ENCODE measurements at regions of chr17 and their contacts with region 1.

Region 1: DNA sequence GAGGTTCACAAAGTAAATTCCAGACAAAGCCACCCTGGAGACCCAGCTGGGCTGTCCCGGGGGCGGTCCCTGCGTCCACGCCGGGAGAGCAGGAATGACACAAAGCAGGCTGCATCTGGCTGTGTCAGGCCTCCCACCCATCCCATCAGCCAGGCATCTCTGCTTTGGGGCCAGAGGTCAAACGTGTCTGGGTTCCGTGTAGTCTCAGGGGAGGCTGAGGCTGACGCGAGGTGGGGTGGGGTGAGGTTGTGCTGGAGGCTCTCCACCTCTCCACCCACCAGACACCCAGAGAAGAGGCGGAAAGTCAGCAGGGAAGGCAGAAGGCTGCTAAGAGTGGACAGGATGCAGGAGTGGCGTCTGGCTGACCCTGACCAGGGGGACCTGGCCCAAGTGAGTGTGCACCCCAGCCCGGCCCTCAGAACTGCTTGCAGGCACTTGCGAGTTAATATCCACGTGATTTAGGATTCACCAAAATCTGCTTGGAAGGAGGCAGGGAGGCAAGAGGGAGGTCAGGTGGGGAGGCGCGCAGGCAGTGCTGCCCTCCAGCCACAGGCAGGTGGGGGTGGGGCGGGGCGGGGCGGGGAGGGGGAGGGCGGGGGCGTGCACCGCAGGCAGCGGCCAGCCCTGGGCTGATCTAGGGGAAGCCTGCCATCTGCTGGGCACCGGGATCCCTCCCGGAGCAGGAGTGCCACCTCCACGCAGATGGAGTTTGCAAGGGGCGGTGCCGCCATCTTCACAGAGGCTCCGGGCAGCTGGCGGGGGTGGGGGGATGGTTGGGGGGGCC is 44.3 kb downstream of the TBC1D16 start:
- DNase-seq: peak; percentile 89
- H3K4me3 ChIP-seq: peak overlapping the region; percentile 18 to 36
- H3K27ac ChIP-seq: peak overlapping the region; percentile 76 to 90
- H3K4me1 ChIP-seq: peaks cover 43% of the 10 kb centered on the region
- H3K27me3 ChIP-seq: no peaks in the 10 kb centered on the region
- CTCF ChIP-seq: peak; percentile 38 to 83 (median 65)
- POLR2A ChIP-seq: no peak

Region 2: DNA sequence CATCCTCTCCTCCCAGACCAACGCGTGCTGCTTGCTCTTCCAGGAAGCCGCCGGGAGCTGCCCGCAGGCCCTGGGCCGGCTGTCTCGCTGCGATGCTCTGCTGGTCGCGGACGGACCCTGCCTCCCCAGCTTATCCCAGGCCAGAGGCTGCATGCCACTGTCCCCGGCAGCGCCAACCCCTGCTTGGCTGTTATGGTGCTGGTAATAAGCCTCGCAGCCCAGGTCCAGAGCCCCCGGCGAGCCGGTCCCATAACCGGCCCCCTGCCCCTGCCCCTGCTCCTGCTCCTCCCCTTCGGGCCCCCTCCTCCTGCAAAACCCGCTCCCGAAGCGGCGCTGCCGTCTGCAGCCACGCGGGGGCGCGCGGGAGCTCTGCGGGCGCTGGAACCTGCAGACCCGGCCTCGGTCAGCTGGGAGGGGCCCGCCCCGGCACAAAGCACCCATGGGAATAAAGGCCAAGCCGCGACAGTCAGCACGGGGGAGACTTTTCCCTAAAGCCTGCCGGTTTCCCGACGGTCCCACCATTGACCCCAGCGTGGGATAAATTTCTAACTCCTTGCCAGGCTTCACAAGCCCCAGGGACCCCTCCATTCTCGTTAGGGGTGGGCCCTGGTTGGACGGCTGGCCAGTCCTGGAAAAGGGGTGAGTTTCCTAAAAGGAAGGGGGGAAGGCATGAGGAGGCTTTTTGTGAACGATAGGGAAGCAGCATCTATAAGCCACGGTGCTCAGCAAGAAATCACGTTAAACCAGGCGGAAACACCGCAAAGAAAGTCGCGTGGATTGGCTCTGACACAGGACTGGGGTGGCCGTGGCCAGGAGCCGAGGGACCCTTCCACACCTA is 249.4 kb before region 1 on chr17:
- intact Hi-C with region 1: loop called (anchors 2 kb)
- DNase-seq: peak; percentile 62
- H3K4me3 ChIP-seq: no peak overlapping the region
- H3K27ac ChIP-seq: no peak overlapping the region
- H3K4me1 ChIP-seq: peaks cover 8% of the 10 kb centered on the region
- H3K27me3 ChIP-seq: peaks cover 2% of the 10 kb centered on the region
- CTCF ChIP-seq: peak; percentile 69 to 85 (median 83)
- POLR2A ChIP-seq: no peak

Region 3: GRCh38 chr17:79796763-79797491 is 194.4 kb before region 1 on chr17 and contains the start of gene CBX8:
- intact Hi-C with region 1: loop called (anchors 5 kb)
- DNase-seq: peak; percentile 99
- H3K4me3 ChIP-seq: peak within 1 kb of the TSS; percentile 61 to 70
- H3K27ac ChIP-seq: peak within 1 kb of the TSS; percentile 72 to 75
- H3K4me1 ChIP-seq: peaks cover 13% of the 10 kb centered on the region
- H3K27me3 ChIP-seq: peaks cover 41% of the 10 kb centered on the region
- CTCF ChIP-seq: peak; percentile 28 to 86 (median 58)
- POLR2A ChIP-seq: peak; percentile 30
- total RNA-seq, gene CBX8: 4.7 to 4.8 TPM

Region 4: DNA sequence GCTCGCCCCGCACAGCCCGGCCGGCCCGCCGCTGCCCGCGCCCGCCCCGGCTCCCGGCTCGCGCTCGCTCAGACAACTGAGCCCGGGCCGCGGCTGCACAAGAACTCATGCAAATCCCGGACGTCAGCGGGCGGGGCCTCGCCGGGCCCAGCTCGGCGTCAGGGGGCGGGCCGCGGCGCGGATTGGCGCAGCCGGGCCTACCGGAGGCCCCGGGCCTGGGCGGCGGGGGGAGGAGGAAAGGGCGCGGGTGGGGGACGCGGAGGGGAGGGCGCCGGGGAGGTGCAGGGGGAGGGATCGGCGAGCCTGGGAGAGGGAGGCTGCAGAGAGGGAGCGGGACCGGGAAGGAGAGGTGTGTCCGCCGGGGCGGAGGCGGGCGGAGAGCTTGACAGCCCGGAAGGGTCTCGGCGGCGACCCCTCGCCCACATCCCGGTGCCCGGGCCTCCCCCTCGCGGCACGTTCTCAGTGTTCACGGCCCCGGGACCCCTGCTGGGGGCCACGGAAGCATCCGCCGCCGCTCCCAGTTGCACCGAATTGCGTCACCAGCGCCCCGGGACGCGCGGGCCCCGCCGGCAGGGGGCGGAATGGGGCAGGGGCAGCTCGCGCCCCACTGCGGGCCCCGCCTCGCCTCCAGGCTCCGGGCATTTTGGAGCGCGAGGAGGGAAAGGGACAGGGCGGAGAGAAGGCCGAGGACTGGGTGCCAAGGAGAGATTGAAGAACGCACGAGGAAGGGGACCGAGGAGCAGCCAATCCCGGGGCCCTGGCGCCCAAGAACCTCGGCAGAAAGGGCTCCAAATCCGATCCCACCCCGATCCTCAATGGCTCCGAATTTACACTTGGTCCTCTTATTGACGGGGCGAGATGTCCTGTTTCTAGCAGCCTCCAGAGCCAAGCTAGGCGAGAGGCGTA is 151.7 kb before region 1 on chr17 and contains the start of gene CBX4:
- intact Hi-C with region 1: loop called (anchors 5 kb)
- DNase-seq: peak; percentile 96
- H3K4me3 ChIP-seq: peak within 1 kb of the TSS; percentile 76 to 86
- H3K27ac ChIP-seq: peak within 1 kb of the TSS; percentile 97
- H3K4me1 ChIP-seq: peaks cover 16% of the 10 kb centered on the region
- H3K27me3 ChIP-seq: peaks cover 17% of the 10 kb centered on the region
- CTCF ChIP-seq: peak; percentile 41 to 91 (median 78)
- POLR2A ChIP-seq: peak; percentile 79
- total RNA-seq, gene CBX4: 28.0 to 28.5 TPM

Region 5: DNA sequence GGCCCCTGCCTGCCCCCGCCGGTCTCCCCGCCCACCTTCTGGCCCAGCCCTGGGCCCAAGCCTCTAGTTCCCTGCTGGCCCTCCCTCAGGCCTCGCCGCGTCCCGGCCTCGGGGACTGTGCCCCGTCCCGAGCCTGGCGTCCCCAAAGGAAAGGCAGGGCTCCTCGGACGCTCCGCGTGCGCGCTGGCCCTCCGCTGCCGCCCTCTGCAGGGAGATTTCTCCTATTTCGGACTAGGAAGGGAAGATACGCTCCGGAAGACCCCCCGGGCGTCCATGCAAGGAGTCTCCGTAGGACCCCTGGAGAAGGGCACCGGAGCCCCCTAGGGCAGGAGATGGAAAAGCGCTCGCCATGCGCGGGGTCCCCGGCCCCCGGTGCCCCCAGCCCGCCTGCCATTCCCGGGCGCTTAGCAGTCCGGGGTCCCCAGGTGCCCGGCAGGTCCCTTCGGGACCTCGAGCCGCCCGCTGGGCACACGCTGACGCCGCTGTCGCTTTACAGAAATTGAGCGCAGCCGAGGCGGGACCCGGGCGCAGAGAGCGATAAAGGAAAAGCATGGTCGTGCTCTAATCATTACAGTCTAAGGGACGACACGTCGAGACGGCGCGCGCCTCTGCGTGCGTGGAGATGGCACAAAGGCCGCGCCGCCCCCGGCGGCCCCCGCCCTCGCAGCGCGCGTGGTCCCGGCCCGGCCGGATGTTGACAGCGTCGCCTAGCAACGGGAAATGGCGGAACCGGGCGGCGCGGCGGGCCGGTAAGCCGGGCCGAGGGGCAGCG is 44.8 kb after region 1 on chr17 and contains the start of gene CCDC40:
- intact Hi-C with region 1: no loop called
- DNase-seq: peak; percentile 79
- H3K4me3 ChIP-seq: peak within 1 kb of the TSS; percentile 47 to 55
- H3K27ac ChIP-seq: peak within 1 kb of the TSS; percentile 82 to 91
- H3K4me1 ChIP-seq: peaks cover 5% of the 10 kb centered on the region
- H3K27me3 ChIP-seq: no peaks in the 10 kb centered on the region
- CTCF ChIP-seq: peak in 1 of 4 experiments; percentile 4
- POLR2A ChIP-seq: peak; percentile 74
- total RNA-seq, gene CCDC40: 11.8 to 19.7 TPM

Measured in prostate gland (tissue), 2 donors.